Activated B cell treated with CpG ODN at 0.5 μM for 24 hours (primary cell): ENCODE measurements at regions of chr3 and their contacts with region 1.

Region 1: DNA sequence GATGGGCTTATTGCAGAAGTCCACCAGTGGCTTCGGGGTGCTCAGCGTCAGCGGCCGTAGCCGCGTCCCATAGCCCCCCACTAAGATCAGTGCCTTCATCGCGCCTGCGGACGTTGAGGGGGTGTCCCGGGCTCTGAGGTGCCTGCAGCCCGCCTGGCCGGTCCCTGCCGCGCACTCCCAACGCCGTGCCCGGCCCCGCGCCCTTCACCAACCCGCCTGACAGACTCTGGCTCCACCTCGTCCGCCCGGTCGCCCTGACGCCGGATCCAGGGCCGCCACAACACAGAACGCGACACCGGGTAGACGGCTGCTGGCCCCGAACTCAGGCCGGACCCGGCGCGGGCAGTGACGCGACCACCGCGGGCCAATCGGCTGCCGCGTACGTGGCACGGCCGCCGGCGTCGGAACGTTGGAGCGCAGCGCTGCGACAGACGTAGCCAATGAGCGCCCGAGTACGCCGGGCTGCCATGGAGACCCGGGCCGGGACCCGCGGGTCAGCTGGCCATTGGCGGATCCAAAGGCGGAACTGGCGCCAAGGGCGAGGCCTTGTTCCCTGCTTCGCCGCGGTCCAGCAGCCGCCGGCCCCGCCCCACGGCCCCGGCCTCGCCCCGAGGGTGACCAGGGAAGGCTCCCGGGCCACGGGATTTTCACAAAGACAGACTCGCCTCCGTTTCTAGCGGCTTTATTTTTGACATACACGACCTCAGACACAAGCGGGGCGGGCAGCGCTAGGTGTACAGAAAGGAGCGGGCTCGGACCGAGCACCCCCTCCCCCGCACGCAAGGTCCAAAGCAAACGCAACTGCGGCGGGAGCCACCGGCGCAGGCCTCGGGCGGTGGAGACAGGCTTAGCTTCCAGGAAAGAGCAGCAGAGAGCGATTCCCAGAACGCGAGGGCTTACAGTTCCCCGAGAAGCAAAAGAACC is at the start of gene GMPPB:
- DNase-seq: peak; percentile 89
- ATAC-seq: peak; percentile 79
- H3K4me3 Mint-ChIP-seq: peak within 1 kb of the TSS; percentile 93
- H3K27ac Mint-ChIP-seq: peak within 1 kb of the TSS; percentile 98
- H3K4me1 Mint-ChIP-seq: peaks cover 59% of the 10 kb centered on the region
- H3K27me3 Mint-ChIP-seq: no peaks in the 10 kb centered on the region
- CTCF ChIP-seq: no peak
- total RNA-seq, gene GMPPB: 39.9 and 40.7 TPM in 2 replicates

Region 2: DNA sequence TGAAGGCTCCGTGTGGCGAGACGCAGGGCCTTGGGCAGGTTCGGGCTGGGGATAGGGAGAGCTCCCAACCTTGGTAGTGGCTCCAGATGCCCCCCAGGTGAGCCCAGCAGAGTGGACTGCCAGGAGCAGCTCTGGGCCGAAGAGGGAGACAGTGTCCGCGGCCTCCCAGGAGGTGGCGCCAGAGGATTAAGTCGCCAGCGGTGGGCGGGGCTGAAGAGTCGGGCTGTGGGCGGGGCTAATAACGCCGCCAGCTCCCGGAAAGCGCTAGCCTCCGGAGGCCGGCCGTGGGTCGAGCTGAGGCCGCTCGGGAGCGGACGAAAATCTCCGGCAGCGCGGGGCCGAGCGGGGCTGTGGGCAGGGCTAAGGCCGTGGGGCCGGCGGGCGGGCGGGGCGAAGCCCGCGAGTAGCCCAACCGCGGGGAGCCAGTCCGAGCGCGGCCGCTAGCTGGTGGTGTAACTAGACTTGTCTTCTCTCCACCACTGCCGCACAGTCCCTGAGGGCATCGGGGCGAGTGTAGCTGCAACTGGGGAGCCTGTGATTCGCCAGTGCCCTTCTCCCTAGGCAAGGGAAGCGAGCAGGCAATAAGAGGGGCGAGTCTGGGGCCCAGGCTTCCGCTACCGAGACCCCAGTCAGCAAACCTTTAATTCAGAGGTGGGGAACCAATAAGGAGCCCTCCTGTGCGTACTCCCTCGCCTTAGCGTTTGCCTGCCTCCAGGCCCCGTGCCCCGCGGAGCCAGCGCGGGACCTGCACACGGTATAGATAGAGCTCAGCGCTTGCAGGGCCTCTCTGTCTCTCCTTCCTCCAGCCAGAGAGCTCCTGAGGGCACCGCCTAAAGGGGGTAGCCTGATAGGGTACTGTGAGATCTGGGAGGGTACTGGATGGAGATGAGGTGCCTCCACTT is 184.0 kb before region 1 on chr3:
- CTCF ChIA-PET with region 1: interaction called, 4 read pairs
- POLR2A ChIA-PET with region 1: interaction called, 10 read pairs
- intact Hi-C with region 1: no loop called
- DNase-seq: peak; percentile 93
- ATAC-seq: peak; percentile 92
- H3K4me3 Mint-ChIP-seq: peak overlapping the region; percentile 79
- H3K27ac Mint-ChIP-seq: peak overlapping the region; percentile 46
- H3K4me1 Mint-ChIP-seq: peaks cover 9% of the 10 kb centered on the region
- H3K27me3 Mint-ChIP-seq: peaks cover 11% of the 10 kb centered on the region
- CTCF ChIP-seq: no peak

Region 3: GRCh38 chr3:49689046-49689907 is 34.6 kb before region 1 on chr3 and contains the starts of genes MST1 and RNF123:
- CTCF ChIA-PET with region 1: no interaction called
- POLR2A ChIA-PET with region 1: interaction called, 3 read pairs
- intact Hi-C with region 1: loop called (anchors 2 kb)
- DNase-seq: peak; percentile 95
- ATAC-seq: peak; percentile 83
- H3K4me3 Mint-ChIP-seq: peak within 1 kb of the TSS; percentile 97
- H3K27ac Mint-ChIP-seq: peak within 1 kb of the TSS; percentile 92
- H3K4me1 Mint-ChIP-seq: peaks cover 38% of the 10 kb centered on the region
- H3K27me3 Mint-ChIP-seq: peaks cover 3% of the 10 kb centered on the region
- CTCF ChIP-seq: no peak
- total RNA-seq, gene MST1: 4.7 and 8.0 TPM in 2 replicates
- total RNA-seq, gene RNF123: 35.1 and 51.4 TPM in 2 replicates

Region 4: GRCh38 chr3:49786241-49786958 is 62.5 kb after region 1 on chr3 and contains the start of gene IP6K1:
- CTCF ChIA-PET with region 1: no interaction called
- POLR2A ChIA-PET with region 1: interaction called, 24 read pairs
- intact Hi-C with region 1: loop called (anchors 1 kb)
- DNase-seq: peak; percentile 97
- ATAC-seq: peak; percentile 99
- H3K4me3 Mint-ChIP-seq: peak within 1 kb of the TSS; percentile 91
- H3K27ac Mint-ChIP-seq: peak within 1 kb of the TSS; percentile 93
- H3K4me1 Mint-ChIP-seq: peaks cover 32% of the 10 kb centered on the region
- H3K27me3 Mint-ChIP-seq: no peaks in the 10 kb centered on the region
- CTCF ChIP-seq: no peak
- total RNA-seq, gene IP6K1: 44.3 and 47.6 TPM in 2 replicates

Region 5: DNA sequence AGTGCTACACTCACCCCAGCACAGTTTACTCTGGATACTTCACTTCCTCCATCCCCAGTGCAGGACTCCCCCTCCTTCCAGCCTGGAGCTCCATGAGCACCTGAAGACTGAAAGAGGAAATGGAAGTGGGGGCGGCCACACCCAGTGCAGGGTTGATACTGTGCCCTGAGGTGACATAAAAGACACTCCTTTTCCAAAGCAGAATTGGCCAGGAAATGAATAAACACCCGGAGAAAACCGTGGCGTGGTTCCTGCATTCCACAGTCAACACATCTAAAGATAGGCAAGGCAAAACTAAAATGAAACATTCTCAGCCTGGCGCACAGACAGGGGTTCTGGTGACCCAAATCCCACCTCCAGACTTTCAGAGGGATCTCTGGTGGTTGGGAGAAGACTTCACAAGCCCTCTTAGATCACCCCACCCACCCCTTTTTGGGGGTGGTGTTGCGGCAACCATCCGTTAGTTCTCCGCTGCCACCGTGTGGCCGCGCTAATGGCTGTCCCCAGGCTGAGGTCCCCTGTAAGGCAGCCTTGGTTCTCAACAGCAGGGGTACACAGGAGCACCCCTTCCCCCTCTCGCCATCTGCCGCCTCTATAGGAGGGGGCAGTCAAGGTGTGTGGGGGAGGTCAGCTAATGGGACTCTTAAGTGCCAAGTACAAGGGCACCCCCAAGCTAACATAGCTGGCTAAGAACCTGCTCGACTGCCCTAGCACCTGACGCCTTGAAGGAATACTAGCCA is 182.3 kb after region 1 on chr3:
- CTCF ChIA-PET with region 1: no interaction called
- POLR2A ChIA-PET with region 1: no interaction called
- intact Hi-C with region 1: loop called (anchors 1 kb)
- DNase-seq: peak; percentile 38
- ATAC-seq: peak; percentile 30
- H3K4me3 Mint-ChIP-seq: peak overlapping the region; percentile 55
- H3K27ac Mint-ChIP-seq: peak overlapping the region; percentile 56
- H3K4me1 Mint-ChIP-seq: peaks cover 30% of the 10 kb centered on the region
- H3K27me3 Mint-ChIP-seq: no peaks in the 10 kb centered on the region
- CTCF ChIP-seq: no peak

Region 6: DNA sequence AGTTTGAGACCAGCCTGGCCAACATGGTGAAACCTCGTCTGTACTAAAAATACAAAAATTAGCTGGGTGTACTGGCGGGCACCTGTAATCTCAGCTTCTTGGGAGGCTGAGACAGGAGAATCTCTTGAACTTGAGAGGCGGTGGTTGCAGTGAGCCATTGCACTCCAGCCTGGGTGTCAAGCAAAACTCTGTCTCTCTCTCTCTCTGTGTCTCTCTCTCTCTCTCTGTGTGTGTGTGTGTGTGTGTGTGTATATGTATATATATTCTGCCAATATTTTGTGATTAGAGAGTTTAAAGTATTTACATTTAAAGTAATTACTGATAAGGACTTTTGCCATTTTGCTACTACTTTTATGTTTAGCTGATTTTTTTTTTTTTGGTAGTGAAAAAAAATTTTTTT is 231.7 kb after region 1 on chr3:
- CTCF ChIA-PET with region 1: no interaction called
- POLR2A ChIA-PET with region 1: no interaction called
- intact Hi-C with region 1: no loop called
- DNase-seq: no peak
- ATAC-seq: no peak
- H3K4me3 Mint-ChIP-seq: no peak overlapping the region
- H3K27ac Mint-ChIP-seq: no peak overlapping the region
- H3K4me1 Mint-ChIP-seq: peaks cover 28% of the 10 kb centered on the region
- H3K27me3 Mint-ChIP-seq: no peaks in the 10 kb centered on the region
- CTCF ChIP-seq: no peak

Region 7: DNA sequence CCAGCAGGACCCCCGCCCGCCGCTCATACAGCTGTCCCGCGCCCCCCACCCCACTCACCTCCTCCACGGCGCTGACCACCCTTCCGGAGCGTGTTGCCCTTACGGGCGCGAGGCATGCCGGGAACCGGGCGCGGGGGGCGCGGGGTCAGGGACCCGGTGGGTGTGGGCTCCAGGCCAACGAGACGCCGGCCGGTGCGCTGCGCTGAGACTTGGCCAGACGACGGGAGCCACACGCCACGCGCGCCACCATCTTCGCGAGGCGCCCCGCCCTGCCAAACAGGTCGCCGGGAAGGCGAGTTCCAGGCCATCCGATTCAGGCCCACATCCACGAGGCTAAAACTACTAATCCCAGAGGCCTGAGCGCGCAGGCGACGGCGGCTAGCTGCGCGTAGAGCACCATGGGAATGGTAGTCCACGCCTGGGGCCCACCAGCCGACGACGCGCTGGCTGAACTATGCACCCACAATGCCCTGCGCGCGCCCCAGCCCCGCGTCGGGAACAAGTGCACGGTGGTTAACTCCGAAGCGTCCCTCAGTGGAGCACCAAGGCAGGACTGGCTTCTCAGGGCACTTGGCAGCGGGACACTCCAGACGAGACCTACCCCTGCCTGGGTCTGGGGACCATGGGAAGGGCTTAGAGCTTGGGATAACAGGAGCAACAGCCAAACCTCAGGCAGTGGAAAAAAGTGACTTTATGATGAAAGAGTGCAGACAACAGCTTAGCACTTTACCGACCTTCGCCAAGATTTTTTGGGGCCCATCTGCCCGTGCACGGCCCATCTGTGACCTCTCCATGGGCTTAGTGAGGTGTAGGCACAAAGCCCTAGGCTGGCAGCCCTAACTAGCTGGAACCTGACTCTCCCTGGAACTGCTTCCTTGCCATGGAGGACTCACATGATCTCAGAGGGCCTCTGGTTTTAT is 568.5 kb after region 1 on chr3 and contains the start of gene IFRD2:
- CTCF ChIA-PET with region 1: no interaction called
- POLR2A ChIA-PET with region 1: no interaction called
- intact Hi-C with region 1: loop called (anchors 2 kb)
- DNase-seq: peak; percentile 87
- ATAC-seq: peak; percentile 99
- H3K4me3 Mint-ChIP-seq: peak within 1 kb of the TSS; percentile 86
- H3K27ac Mint-ChIP-seq: peak within 1 kb of the TSS; percentile 95
- H3K4me1 Mint-ChIP-seq: peaks cover 20% of the 10 kb centered on the region
- H3K27me3 Mint-ChIP-seq: no peaks in the 10 kb centered on the region
- CTCF ChIP-seq: no peak
- total RNA-seq, gene IFRD2: 92.2 and 105 TPM in 2 replicates